Colonic mucosa (tissue), 4 donors: ENCODE measurements at regions of chr1 and their contacts with region 1.

Region 1: GRCh38 chr1:6396998-6397397 is 3.4 kb upstream of the ACOT7 start:
- DNase-seq: no peak
- H3K4me3 ChIP-seq: no peak overlapping the region
- H3K27ac ChIP-seq: no peak overlapping the region
- H3K4me1 ChIP-seq: peaks cover 6% of the 10 kb centered on the region
- H3K27me3 ChIP-seq: no peaks in the 10 kb centered on the region
- CTCF ChIP-seq: no peak

Region 2: GRCh38 chr1:5536776-5537175 is 860.2 kb before region 1 on chr1:
- intact Hi-C with region 1: no loop called
- DNase-seq: no peak
- H3K4me3 ChIP-seq: no peak overlapping the region
- H3K27ac ChIP-seq: no peak overlapping the region
- H3K4me1 ChIP-seq: no peaks in the 10 kb centered on the region
- H3K27me3 ChIP-seq: no peaks in the 10 kb centered on the region
- CTCF ChIP-seq: no peak

Region 3: DNA sequence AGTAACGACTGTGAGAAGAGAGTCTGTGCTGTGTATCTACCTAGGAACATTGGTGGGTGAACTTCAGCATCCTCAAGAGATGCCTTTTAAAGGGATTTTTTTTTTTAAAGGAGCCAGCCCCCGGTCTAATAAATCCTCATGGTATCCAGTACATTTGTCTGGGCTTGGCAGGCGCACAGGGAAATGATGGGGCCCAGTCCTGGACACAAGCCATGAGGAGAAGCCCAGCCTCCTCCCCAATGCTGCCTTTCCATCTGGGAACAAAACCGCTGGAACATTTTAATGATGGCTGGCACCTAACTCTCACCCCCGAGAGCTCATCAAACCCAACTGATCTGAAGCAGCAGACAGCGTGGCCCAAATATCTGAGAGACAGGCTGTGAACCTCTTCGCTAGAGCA is 67.6 kb before region 1 on chr1:
- intact Hi-C with region 1: no loop called
- DNase-seq: no peak
- H3K4me3 ChIP-seq: no peak overlapping the region
- H3K27ac ChIP-seq: no peak overlapping the region
- H3K4me1 ChIP-seq: peaks cover 7% of the 10 kb centered on the region
- H3K27me3 ChIP-seq: no peaks in the 10 kb centered on the region
- CTCF ChIP-seq: no peak

Region 4: DNA sequence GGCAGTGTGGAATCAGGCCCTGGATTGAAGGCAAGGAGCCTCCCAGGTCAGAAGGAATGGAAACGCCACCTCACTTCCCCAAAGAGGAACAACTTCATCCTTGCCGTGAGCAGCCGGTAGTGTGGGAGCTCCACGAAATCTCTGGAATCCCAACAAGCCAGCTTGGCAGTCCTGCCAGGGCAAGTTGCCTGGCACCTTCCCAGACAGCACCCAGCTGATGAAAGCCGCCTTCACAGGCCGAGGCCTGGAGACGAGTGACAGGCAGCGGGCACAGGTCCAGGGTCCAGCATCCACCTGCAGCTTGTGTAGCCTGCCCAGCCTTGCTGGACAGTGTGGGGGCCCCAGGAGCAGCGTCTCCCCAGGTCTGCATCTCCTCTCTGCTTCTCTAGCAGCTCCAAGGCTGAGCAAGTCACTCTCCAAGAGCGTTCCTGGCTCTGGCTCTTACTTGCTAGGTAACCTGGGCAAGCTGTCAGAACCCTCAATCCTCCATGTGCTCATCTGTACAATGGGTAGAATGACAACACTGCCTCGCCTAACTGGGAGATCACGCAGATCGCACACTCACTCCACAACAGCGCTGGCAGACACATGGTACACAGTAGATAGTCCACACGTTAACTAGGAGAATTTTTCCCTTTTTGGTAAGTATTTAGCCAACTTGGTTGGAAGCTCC is 46.4 kb before region 1 on chr1:
- intact Hi-C with region 1: loop called (anchors 5 kb)
- DNase-seq: no peak
- H3K4me3 ChIP-seq: no peak overlapping the region
- H3K27ac ChIP-seq: no peak overlapping the region
- H3K4me1 ChIP-seq: peaks cover 24% of the 10 kb centered on the region
- H3K27me3 ChIP-seq: no peaks in the 10 kb centered on the region
- CTCF ChIP-seq: no peak

Region 5: DNA sequence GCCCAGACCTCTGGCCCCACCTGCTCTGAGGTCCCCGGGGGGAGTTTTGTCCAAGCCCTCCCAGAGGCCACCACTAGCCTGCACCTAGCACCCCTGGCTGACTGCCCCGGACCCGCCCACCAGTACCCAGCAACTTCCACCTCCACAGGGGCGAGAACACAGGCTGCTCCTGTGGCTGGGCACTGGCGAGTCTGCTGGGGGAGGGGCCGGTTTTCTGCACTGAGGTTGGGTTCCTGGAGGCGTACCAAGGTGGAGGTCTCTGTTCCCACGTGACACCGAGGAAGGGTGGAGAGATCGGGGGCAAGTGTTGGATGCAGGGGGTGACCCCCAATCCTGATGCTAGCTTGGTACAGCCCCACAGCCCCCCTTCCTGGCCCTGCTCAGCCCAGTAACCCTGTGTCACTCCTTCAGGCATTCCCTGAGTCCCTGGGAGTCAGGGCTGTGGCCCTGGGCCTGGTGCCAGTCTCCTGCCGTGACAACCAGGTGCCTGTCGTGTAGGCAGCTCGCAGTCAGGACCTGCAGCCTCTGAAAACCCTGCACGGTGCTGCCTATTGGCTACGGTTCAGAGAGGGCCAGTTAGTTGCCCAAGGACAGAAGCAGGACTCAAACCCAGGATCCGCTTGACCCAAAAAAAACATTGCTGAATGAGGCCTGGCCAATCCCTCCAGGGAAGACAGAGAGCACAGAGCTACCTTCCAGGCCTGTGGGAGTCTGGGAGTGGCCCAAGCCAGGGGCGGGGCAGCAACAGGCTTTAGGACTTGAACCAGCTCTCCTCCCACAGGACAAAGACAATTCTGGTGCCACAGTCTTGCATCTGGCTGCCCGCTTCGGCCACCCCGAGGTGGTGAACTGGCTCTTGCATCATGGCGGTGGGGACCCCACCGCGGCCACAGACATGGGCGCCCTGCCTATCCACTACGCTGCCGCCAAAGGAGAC is 30.7 kb after region 1 on chr1:
- intact Hi-C with region 1: no loop called
- DNase-seq: peak; percentile 81
- H3K4me3 ChIP-seq: no peak overlapping the region
- H3K27ac ChIP-seq: peak overlapping the region; percentile 17
- H3K4me1 ChIP-seq: peaks cover 6% of the 10 kb centered on the region
- H3K27me3 ChIP-seq: peaks cover 22% of the 10 kb centered on the region
- CTCF ChIP-seq: no peak